ENCODE measurements at regions of chr1 and their contacts with region 1.

Region 1: DNA sequence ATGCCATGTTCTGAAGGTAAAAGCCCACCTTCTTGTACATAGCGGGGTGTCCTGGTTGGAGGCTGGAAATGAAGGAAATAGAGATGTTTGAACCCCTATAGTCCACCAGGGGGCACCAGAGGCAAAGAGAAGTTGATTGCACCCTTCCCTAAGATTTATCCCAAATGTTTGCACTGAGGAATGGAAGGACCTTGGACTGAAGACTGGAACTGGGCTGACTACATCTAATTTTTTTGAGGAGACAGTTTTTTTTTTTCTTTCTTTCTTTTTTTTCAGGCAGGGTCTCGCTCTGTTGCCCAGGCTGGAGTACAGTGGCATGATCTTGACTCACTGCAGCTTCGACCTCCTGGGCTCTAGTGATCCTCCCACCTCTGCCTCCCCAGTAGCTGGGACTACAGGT is 55.3 kb upstream of the EIF4G3 start:
- DNase-seq: peak; percentile 36 to 60 (median 50)
- H3K4me3 ChIP-seq: no peak overlapping the region
- H3K27ac ChIP-seq: no peak overlapping the region
- H3K4me1 ChIP-seq: peaks cover 0 to 6% (median 3%) of the 10 kb centered on the region in 4 experiments
- H3K27me3 ChIP-seq: no peaks in the 10 kb centered on the region

Region 2: GRCh38 chr1:21050031-21050430 is 182.0 kb before region 1 on chr1:
- CTCF ChIA-PET with region 1: no interaction called
- POLR2A ChIA-PET with region 1: no interaction called
- DNase-seq: no peak
- H3K4me3 ChIP-seq: no peak overlapping the region
- H3K27ac ChIP-seq: no peak overlapping the region
- H3K4me1 ChIP-seq: peaks cover 0 to 20% (median 5%) of the 10 kb centered on the region in 4 experiments
- H3K27me3 ChIP-seq: no peaks in the 10 kb centered on the region

Region 3: GRCh38 chr1:21216835-21217811 is 14.9 kb before region 1 on chr1:
- CTCF ChIA-PET with region 1: interaction called, 15 read pairs
- POLR2A ChIA-PET with region 1: no interaction called
- DNase-seq: peak; percentile 46 to 76 (median 66)
- H3K4me3 ChIP-seq: no peak overlapping the region
- H3K27ac ChIP-seq: no peak overlapping the region
- H3K4me1 ChIP-seq: no peaks in the 10 kb centered on the region
- H3K27me3 ChIP-seq: no peaks in the 10 kb centered on the region

Region 4: GRCh38 chr1:21244986-21245687 is 13.1 kb after region 1 on chr1:
- CTCF ChIA-PET with region 1: interaction called, 35 read pairs
- POLR2A ChIA-PET with region 1: no interaction called
- DNase-seq: no peak
- H3K4me3 ChIP-seq: no peak overlapping the region
- H3K27ac ChIP-seq: no peak overlapping the region
- H3K4me1 ChIP-seq: no peaks in the 10 kb centered on the region
- H3K27me3 ChIP-seq: no peaks in the 10 kb centered on the region

Measured in common myeloid progenitor, CD34-positive (primary cell).